Gastrocnemius medialis (tissue), 4 donors: ENCODE measurements at regions of chr10 and their contacts with region 1.

Region 1: DNA sequence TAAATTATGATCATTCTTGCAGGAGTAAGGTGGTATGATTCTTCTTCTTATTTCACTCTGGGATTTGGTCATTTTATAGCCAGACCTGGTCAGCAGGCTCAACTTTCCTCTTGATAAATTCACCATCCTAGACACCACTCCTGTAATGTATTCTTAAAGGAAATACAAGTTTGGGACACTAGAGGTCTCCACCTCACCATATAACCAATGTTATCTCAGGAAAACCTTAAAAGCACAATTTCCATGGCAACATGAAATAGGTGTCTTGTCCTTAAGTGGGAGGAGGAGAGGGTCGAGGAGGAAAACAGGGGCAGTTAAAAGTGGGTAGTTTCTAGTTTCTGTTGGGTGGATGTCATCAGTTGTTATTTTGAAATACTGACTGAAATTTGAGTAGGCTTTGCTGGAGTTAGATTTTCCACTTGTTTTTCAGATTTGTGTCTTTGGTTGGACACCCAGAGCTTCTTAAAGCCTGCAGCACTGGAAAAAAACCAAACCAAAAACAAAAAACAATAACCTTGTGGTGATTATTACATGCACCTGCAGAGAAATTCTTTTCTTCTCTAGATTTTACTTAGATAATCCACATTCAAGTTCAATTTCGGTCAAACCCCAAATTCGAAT is 163.1 kb downstream of the PRKCQ start:
- DNase-seq: no peak
- ATAC-seq: peak; percentile 52 to 75
- H3K4me3 ChIP-seq: no peak overlapping the region
- H3K27ac ChIP-seq: no peak overlapping the region
- H3K4me1 ChIP-seq: no peaks in the 10 kb centered on the region
- H3K27me3 ChIP-seq: no peaks in the 10 kb centered on the region
- CTCF ChIP-seq: peak; percentile 58 to 70 (median 62)
- POLR2A ChIP-seq: no peak

Region 2: GRCh38 chr10:6363503-6363902 is 53.5 kb before region 1 on chr10:
- in situ Hi-C with region 1: no loop called
- intact Hi-C with region 1: no loop called
- DNase-seq: no peak
- ATAC-seq: no peak
- H3K4me3 ChIP-seq: no peak overlapping the region
- H3K27ac ChIP-seq: no peak overlapping the region
- H3K4me1 ChIP-seq: no peaks in the 10 kb centered on the region
- H3K27me3 ChIP-seq: no peaks in the 10 kb centered on the region
- CTCF ChIP-seq: no peak
- POLR2A ChIP-seq: no peak

Region 3: GRCh38 chr10:6431861-6432260 is 14.9 kb after region 1 on chr10:
- in situ Hi-C with region 1: no loop called
- intact Hi-C with region 1: no loop called
- DNase-seq: no peak
- ATAC-seq: no peak
- H3K4me3 ChIP-seq: no peak overlapping the region
- H3K27ac ChIP-seq: peak overlapping the region in 1 of 4 donors; percentile 20
- H3K4me1 ChIP-seq: no peaks in the 10 kb centered on the region
- H3K27me3 ChIP-seq: no peaks in the 10 kb centered on the region
- CTCF ChIP-seq: no peak
- POLR2A ChIP-seq: no peak

Region 4: GRCh38 chr10:6667679-6668270 is 250.8 kb after region 1 on chr10:
- in situ Hi-C with region 1: loop called in 1 of 4 experiments (anchors 10 kb)
- intact Hi-C with region 1: loop called (anchors 5 kb)
- DNase-seq: peak in 1 of 2 donors; percentile 17
- ATAC-seq: peak; percentile 74 to 82
- H3K4me3 ChIP-seq: no peak overlapping the region
- H3K27ac ChIP-seq: no peak overlapping the region
- H3K4me1 ChIP-seq: peaks cover 10 to 15% of the 10 kb centered on the region in 2 donors
- H3K27me3 ChIP-seq: no peaks in the 10 kb centered on the region
- CTCF ChIP-seq: peak; percentile 27 to 52 (median 31)
- POLR2A ChIP-seq: no peak